ENCODE measurements at regions of chr12 and their contacts with region 1.

Region 1: DNA sequence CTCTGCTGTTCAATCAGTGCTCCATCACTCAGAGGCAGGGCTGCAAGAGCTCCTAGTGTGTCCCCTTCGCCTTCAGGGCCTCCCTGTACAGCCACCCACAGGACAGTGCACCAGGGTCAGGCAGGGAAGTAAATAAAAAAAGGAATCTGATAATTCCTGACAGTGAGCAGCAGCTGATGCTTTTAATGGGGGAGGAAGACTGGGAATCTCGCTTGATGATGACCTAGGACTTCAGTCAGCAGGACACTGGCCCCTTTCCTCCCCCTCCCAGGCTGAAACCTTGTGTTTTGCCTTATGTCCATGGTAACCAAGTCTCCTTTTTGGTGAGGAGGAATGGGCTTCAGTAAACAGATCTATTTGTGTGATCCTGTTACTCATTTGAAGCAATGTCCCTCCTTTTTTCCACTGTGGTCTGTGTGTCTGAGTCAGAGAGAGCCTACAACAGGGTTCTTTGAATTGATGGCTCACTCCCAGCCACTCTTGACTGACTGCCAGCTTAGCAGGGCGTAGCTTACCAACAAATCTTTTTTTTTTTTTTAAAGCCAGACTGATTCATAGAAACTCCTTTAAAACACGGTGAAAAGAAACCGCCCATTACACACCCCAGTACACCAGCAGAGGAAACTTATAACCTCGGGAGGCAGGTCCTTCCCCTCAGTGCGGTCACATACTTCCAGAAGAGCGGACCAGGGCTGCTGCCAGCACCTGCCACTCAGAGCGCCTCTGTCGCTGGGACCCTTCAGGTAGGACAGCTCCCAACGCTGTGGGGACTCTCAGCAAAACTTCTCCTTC is at the start of gene EMP1:
- DNase-seq: peak; percentile 89
- ATAC-seq: peak; percentile 97
- H3K4me3 Mint-ChIP-seq: peak within 1 kb of the TSS; percentile 82
- H3K27ac Mint-ChIP-seq: peak within 1 kb of the TSS; percentile 83
- H3K4me1 Mint-ChIP-seq: peaks cover 32% of the 10 kb centered on the region
- H3K27me3 Mint-ChIP-seq: no peaks in the 10 kb centered on the region
- total RNA-seq, gene EMP1: 12.9 to 16.6 TPM

Region 2: GRCh38 chr12:12628013-12628412 is 568.3 kb before region 1 on chr12:
- CTCF ChIA-PET with region 1: no interaction called
- POLR2A ChIA-PET with region 1: no interaction called
- intact Hi-C with region 1: no loop called
- DNase-seq: no peak
- ATAC-seq: no peak
- H3K4me3 Mint-ChIP-seq: no peak overlapping the region
- H3K27ac Mint-ChIP-seq: no peak overlapping the region
- H3K4me1 Mint-ChIP-seq: peaks cover 64% of the 10 kb centered on the region
- H3K27me3 Mint-ChIP-seq: no peaks in the 10 kb centered on the region

Region 3: GRCh38 chr12:12724661-12725545 is 471.4 kb before region 1 on chr12:
- CTCF ChIA-PET with region 1: no interaction called
- POLR2A ChIA-PET with region 1: no interaction called
- intact Hi-C with region 1: loop called in 1 of 2 experiments (anchors 5 kb)
- DNase-seq: peak; percentile 94
- ATAC-seq: peak; percentile 59
- H3K4me3 Mint-ChIP-seq: peak overlapping the region; percentile 93
- H3K27ac Mint-ChIP-seq: peak overlapping the region; percentile 98
- H3K4me1 Mint-ChIP-seq: peaks cover 45% of the 10 kb centered on the region
- H3K27me3 Mint-ChIP-seq: no peaks in the 10 kb centered on the region

Region 4: GRCh38 chr12:13052421-13052820 is 143.9 kb before region 1 on chr12:
- CTCF ChIA-PET with region 1: no interaction called
- POLR2A ChIA-PET with region 1: no interaction called
- intact Hi-C with region 1: loop called in 1 of 2 experiments (anchors 1 kb)
- DNase-seq: no peak
- ATAC-seq: peak; percentile 97
- H3K4me3 Mint-ChIP-seq: no peak overlapping the region
- H3K27ac Mint-ChIP-seq: peak overlapping the region; percentile 43
- H3K4me1 Mint-ChIP-seq: peaks cover 26% of the 10 kb centered on the region
- H3K27me3 Mint-ChIP-seq: no peaks in the 10 kb centered on the region

Region 5: DNA sequence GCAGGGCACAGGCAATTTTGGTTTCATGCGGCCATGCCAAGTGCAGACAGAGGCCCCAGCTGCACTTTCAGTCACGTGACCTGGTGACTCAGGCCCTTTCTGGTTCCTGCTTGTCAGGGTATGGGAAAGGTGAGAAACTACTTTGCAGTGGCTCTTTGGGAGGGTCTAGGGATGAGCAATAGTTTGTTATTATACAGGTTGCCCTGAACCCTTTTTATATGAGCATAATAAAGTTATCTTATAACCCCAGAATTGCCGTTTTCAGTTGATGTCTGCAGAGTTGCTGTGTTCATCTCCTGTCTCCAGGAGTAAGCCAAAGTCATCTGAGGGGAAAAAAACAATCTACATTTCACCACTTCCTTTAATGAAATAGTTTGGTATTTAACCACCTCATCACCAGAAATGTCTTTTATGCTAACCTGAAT is 30.7 kb before region 1 on chr12:
- CTCF ChIA-PET with region 1: interaction called, 3 read pairs
- POLR2A ChIA-PET with region 1: no interaction called
- intact Hi-C with region 1: loop called (anchors 1 kb)
- DNase-seq: peak; percentile 92
- ATAC-seq: peak; percentile 97
- H3K4me3 Mint-ChIP-seq: no peak overlapping the region
- H3K27ac Mint-ChIP-seq: peak overlapping the region; percentile 58
- H3K4me1 Mint-ChIP-seq: peaks cover 24% of the 10 kb centered on the region
- H3K27me3 Mint-ChIP-seq: peaks cover 2% of the 10 kb centered on the region

Region 6: DNA sequence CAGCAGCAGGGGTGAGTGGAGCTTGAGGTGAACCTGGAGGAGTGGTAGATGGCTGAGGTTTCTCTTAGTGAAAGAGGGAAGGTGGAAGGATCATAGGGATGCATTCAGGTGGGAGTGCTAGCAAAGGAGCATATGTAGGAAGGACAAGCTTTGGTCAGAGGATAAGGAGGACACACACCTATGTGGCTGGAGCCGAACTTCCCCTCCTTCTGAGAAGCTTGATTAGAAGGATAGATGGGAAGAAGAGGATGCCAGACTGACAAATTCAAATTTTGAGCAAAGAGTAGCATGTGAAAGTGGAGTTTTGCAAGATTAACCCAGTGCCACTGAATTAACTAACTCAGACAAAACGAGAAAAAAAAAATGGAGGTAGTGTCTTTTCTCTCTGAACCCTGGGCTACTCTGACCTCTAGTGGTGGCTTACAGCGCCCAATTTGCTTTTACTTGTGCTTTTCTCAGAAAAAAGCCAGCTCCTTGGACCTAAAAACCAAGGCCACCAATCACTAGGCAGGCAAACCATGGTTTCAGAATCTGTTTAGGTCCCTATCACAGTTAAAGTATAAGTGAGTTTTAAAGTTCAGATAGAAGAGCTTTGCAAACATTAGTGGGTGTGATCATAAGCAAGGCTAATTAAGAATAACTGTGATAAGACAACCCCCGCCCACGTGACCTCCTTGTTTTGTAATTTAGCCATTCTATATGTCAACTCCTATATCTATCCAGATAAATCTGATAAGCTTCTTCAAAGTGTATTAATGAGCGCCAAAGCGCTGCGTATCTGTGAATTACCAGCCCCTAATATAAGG is 15.7 kb after region 1 on chr12:
- CTCF ChIA-PET with region 1: interaction called, 37 read pairs
- POLR2A ChIA-PET with region 1: interaction called, 6 read pairs
- intact Hi-C with region 1: loop called (anchors 1 kb)
- DNase-seq: peak; percentile 84
- ATAC-seq: peak; percentile 59
- H3K4me3 Mint-ChIP-seq: no peak overlapping the region
- H3K27ac Mint-ChIP-seq: peak overlapping the region; percentile 49
- H3K4me1 Mint-ChIP-seq: peaks cover 29% of the 10 kb centered on the region
- H3K27me3 Mint-ChIP-seq: no peaks in the 10 kb centered on the region